Dendritic cell treated with granulocyte-macrophage colony-stimulating factor and Interleukin-4, amounts not matched to agents 40 ng/mL and 50 ng/mL, for 4 days (primary cell): ENCODE measurements at regions of chr2 and their contacts with region 1.

Region 1: GRCh38 chr2:48946449-48947048 is 191.0 kb upstream of the LHCGR start:
- H3K4me3 Mint-ChIP-seq: no peak overlapping the region
- H3K27ac Mint-ChIP-seq: no peak overlapping the region
- H3K4me1 Mint-ChIP-seq: no peaks in the 10 kb centered on the region
- H3K27me3 Mint-ChIP-seq: peaks cover 2% of the 10 kb centered on the region

Region 2: GRCh38 chr2:48984922-48985321 is 38.4 kb after region 1 on chr2:
- intact Hi-C with region 1: no loop called
- H3K4me3 Mint-ChIP-seq: no peak overlapping the region
- H3K27ac Mint-ChIP-seq: no peak overlapping the region
- H3K4me1 Mint-ChIP-seq: no peaks in the 10 kb centered on the region
- H3K27me3 Mint-ChIP-seq: no peaks in the 10 kb centered on the region

Region 3: GRCh38 chr2:50143822-50144575 is 1197.5 kb after region 1 on chr2:
- intact Hi-C with region 1: loop called (anchors 2 kb)
- H3K4me3 Mint-ChIP-seq: peak overlapping the region; percentile 70
- H3K27ac Mint-ChIP-seq: no peak overlapping the region
- H3K4me1 Mint-ChIP-seq: peaks cover 5% of the 10 kb centered on the region
- H3K27me3 Mint-ChIP-seq: no peaks in the 10 kb centered on the region

Region 4: GRCh38 chr2:50401772-50402653 is 1455.5 kb after region 1 on chr2:
- intact Hi-C with region 1: loop called (anchors 5 kb)
- H3K4me3 Mint-ChIP-seq: no peak overlapping the region
- H3K27ac Mint-ChIP-seq: no peak overlapping the region
- H3K4me1 Mint-ChIP-seq: no peaks in the 10 kb centered on the region
- H3K27me3 Mint-ChIP-seq: no peaks in the 10 kb centered on the region

Region 5: GRCh38 chr2:50492477-50492851 is 1545.9 kb after region 1 on chr2:
- intact Hi-C with region 1: loop called (anchors 1 kb)
- H3K4me3 Mint-ChIP-seq: no peak overlapping the region
- H3K27ac Mint-ChIP-seq: no peak overlapping the region
- H3K4me1 Mint-ChIP-seq: no peaks in the 10 kb centered on the region
- H3K27me3 Mint-ChIP-seq: no peaks in the 10 kb centered on the region